ENCODE measurements at regions of chr11 and their contacts with region 1.

Region 1: GRCh38 chr11:7571640-7572000 is 57.8 kb downstream of the PPFIBP2 start:
- DNase-seq: peak; percentile 88
- H3K4me3 ChIP-seq: no peak overlapping the region
- H3K27ac ChIP-seq: peak overlapping the region; percentile 72
- H3K4me1 ChIP-seq: peaks cover 34% of the 10 kb centered on the region
- H3K27me3 ChIP-seq: no peaks in the 10 kb centered on the region
- CTCF ChIP-seq: peak; percentile 91

Region 2: GRCh38 chr11:7657306-7658025 is 85.8 kb after region 1 on chr11:
- intact Hi-C with region 1: loop called (anchors 2 kb)
- DNase-seq: peak; percentile 69
- H3K4me3 ChIP-seq: no peak overlapping the region
- H3K27ac ChIP-seq: no peak overlapping the region
- H3K4me1 ChIP-seq: no peaks in the 10 kb centered on the region
- H3K27me3 ChIP-seq: no peaks in the 10 kb centered on the region
- CTCF ChIP-seq: peak; percentile 37

Measured in colonic mucosa (tissue), 4 donors.